Endothelial cell of umbilical vein (primary cell): ENCODE measurements at regions of chr3 and their contacts with region 1.

Region 1: DNA sequence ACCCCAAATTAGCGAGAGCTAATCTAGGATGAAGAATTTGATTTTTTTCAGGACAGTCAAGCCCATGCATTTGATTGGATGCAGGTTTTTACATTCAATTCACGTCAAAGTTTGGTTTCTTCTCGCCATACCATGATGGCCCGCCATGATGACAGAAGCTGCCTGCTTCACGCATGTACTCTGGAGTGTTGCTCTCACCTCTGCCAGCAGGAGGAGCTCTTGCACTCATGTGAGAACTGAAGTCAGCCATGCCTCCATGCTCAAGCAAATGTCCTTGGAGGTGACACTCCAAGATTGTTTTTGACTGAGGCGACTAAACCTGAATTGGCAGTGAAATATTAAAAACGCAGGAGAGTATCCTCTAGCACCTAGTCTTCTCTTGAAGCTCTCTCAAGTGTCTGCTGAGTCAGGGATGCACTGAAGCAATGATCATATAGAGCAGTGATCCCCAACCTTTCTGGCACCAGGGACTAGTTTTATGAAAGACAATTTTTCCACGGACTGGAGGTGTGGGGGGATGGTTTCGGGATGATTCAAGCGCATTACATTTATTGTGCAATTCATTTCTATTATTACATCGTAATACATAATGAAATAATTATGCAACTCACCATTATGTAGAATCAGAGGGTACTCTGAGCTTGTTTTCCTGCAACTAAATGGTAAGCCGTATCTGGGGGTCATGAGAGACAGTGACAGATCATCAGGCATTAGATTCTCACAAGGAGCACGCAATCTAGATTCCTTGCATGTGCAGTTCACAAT is 121.0 kb downstream of the SAMMSON start:
- DNase-seq: peak; percentile 63
- H3K4me3 ChIP-seq: no peak overlapping the region
- H3K27ac ChIP-seq: no peak overlapping the region
- H3K4me1 ChIP-seq: no peaks in the 10 kb centered on the region
- H3K27me3 ChIP-seq: no peaks in the 10 kb centered on the region
- CTCF ChIP-seq: peak; percentile 75 to 84
- POLR2A ChIP-seq: no peak

Region 2: GRCh38 chr3:70108072-70108471 is 12.5 kb before region 1 on chr3:
- CTCF ChIA-PET with region 1: interaction called, 62 read pairs
- POLR2A ChIA-PET with region 1: no interaction called
- dilution Hi-C with region 1: no loop called
- intact Hi-C with region 1: no loop called
- DNase-seq: no peak
- H3K4me3 ChIP-seq: no peak overlapping the region
- H3K27ac ChIP-seq: no peak overlapping the region
- H3K4me1 ChIP-seq: peaks cover 11% of the 10 kb centered on the region
- H3K27me3 ChIP-seq: no peaks in the 10 kb centered on the region
- CTCF ChIP-seq: peak; percentile 45 to 49
- POLR2A ChIP-seq: no peak

Region 3: GRCh38 chr3:70149714-70150400 is 29.3 kb after region 1 on chr3:
- CTCF ChIA-PET with region 1: interaction called, 14 read pairs
- POLR2A ChIA-PET with region 1: no interaction called
- dilution Hi-C with region 1: no loop called
- intact Hi-C with region 1: no loop called
- DNase-seq: no peak
- H3K4me3 ChIP-seq: no peak overlapping the region
- H3K27ac ChIP-seq: no peak overlapping the region
- H3K4me1 ChIP-seq: no peaks in the 10 kb centered on the region
- H3K27me3 ChIP-seq: no peaks in the 10 kb centered on the region
- CTCF ChIP-seq: no peak
- POLR2A ChIP-seq: no peak

Region 4: GRCh38 chr3:70358978-70359580 is 238.5 kb after region 1 on chr3:
- CTCF ChIA-PET with region 1: interaction called, 80 read pairs
- POLR2A ChIA-PET with region 1: no interaction called
- dilution Hi-C with region 1: no loop called
- intact Hi-C with region 1: loop called (anchors 1 kb)
- DNase-seq: peak; percentile 72
- H3K4me3 ChIP-seq: no peak overlapping the region
- H3K27ac ChIP-seq: no peak overlapping the region
- H3K4me1 ChIP-seq: no peaks in the 10 kb centered on the region
- H3K27me3 ChIP-seq: no peaks in the 10 kb centered on the region
- CTCF ChIP-seq: peak; percentile 40 to 59
- POLR2A ChIP-seq: no peak